Dorsolateral prefrontal cortex (tissue), 120 donors: ENCODE measurements at regions of chr7 and their contacts with region 1.

Region 1: DNA sequence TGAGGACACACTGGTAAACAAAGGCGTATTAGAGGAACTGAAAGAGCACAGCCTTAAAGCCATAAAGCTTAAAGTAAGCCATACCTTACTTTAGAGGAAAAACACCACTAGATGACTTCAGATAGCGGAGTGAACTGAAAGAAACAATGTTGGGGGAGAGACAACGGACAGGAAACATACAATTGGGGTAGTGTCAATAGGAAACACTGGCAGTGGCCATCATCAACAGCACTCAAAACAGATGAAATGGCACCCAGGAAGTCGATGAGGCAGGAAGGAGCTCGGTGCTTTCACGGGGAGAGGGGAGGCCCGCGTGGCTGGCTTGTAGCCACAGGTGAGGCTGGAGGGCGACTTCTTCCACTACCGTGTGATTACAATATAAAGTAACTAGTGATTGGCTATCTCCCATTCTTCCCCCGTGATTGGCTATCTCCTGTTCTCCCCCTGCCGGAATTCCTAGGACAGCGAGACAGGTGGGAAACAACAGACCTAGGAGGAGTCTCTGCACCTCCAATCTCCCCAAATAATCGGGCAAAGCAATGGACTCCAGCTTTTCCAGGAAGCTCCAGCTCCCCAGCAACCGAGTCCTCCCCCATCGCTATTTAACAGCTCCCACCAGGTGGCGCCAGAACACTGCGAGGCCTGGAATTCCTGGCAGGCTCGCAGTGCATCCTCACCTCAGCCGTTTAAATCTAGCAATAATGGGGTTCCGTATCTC is 2.4 kb upstream of the TAS2R38 start:
- DNase-seq: peak; percentile 43 to 77 (median 62)
- H3K4me3 ChIP-seq: peak overlapping the region in 52 of 59 donors; percentile 3 to 60 (median 37)
- H3K27ac ChIP-seq: peak overlapping the region in 1 of 59 donors; percentile 47
- H3K27me3 ChIP-seq: peaks cover 0 to 6% (median 0%) of the 10 kb centered on the region in 45 donors
- CTCF ChIP-seq: peak; percentile 67 to 93 (median 83)

Region 2: GRCh38 chr7:142088022-142088714 is 112.2 kb after region 1 on chr7:
- intact Hi-C with region 1: loop called in 1 of 2 experiments (anchors 5 kb)
- DNase-seq: peak in 8 of 10 donors; percentile 3 to 80 (median 50)
- H3K4me3 ChIP-seq: no peak overlapping the region
- H3K27ac ChIP-seq: no peak overlapping the region
- H3K27me3 ChIP-seq: peaks cover 0 to 34% (median 0%) of the 10 kb centered on the region in 45 donors
- CTCF ChIP-seq: peak in 3 of 56 donors; percentile 8 to 15 (median 10)

Region 3: DNA sequence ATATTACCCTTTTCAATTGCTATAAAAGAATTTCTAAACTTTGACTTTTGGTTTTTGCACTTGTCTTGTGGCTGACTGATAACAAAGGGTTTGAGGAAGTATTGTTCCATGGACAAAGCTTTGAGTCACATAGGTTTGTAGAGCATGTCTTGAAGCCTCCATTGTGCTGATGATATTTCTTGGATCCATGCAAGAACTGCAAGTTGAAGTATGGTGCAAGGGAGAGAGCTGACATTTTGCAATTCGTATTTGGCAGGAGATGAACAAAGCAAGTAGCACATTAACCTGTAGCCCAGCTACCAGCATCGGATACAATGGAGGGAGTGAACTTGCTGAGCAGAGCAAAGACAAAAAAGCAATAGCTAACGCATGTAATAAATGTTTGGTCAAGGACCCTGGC is 158.9 kb after region 1 on chr7:
- intact Hi-C with region 1: no loop called
- DNase-seq: no peak
- H3K4me3 ChIP-seq: no peak overlapping the region
- H3K27ac ChIP-seq: no peak overlapping the region
- H3K27me3 ChIP-seq: peaks cover 0 to 9% (median 0%) of the 10 kb centered on the region in 45 donors
- CTCF ChIP-seq: no peak

Region 4: GRCh38 chr7:142188846-142189245 is 212.9 kb after region 1 on chr7:
- intact Hi-C with region 1: loop called (anchors 2 to 5 kb)
- DNase-seq: no peak
- H3K4me3 ChIP-seq: no peak overlapping the region
- H3K27ac ChIP-seq: no peak overlapping the region
- H3K27me3 ChIP-seq: peaks cover 0 to 29% (median 0%) of the 10 kb centered on the region in 45 donors
- CTCF ChIP-seq: peak in 52 of 56 donors; percentile 21 to 81 (median 56)